ENCODE measurements at regions of chr3 and their contacts with region 1.

Region 1: DNA sequence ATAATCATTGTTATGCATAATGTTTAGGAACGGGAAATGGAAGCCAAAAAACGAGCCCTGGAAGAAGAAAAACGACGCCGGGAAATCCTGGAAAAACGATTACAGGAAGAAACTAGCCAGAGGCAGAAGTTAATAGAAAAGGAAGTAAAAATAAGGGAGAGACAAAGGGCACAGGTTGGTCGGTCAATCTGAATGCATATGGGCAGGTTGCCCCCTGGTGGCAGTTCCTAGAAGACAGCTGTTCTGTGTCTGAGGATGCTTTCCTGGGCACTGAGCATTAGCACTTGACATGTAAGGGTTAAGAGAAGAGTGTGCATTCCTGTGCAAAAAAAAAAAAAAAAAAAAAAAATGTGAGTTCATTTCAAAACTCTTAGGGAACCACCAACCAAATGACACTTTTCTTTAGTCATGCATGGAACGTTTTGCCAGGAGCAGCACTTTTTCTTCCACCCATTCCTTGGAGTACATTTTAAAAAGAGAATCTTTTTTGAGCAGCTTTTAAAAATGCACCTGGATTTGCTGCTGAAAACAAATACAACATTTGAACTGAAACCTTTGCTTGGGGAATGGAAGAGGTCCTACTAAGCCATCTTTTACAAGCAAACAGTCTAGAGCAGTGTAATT is 11.1 kb upstream of the ABHD10 start:
- DNase-seq: peak; percentile 63 to 95 (median 80)
- H3K4me3 ChIP-seq: peak overlapping the region in 4 of 59 donors; percentile 2 to 26 (median 18)
- H3K27ac ChIP-seq: peak overlapping the region in 4 of 59 donors; percentile 17 to 40 (median 39)
- H3K27me3 ChIP-seq: no peaks in the 10 kb centered on the region
- CTCF ChIP-seq: peak; percentile 77 to 99 (median 95)

Region 2: DNA sequence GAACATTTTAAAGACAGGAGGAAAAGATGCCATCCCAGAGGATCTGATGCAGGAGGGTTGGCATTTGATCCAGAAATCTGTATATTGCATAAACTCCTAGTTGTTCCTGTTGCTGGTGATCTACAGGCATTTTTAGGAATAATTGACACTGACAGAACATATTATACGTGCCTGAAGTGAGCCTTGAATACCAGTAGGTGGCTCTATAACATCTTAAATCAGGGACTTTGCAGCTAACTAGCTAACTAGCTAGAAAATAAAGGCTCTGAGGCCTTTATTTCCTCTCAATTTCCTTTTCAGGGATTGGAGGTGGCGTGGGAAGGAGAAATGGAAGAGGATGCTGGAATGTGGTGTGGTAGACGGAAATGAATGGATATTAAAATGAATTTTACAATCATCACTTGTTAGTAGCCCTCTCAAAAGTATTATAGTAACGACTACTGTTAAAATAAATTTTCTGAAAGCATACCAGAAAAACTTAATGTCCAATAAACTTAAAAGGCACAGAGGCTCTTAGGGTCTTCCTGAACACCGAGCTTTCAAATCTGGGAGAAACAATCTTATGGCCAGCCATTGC is 298.8 kb before region 1 on chr3:
- intact Hi-C with region 1: loop called (anchors 2 to 5 kb)
- DNase-seq: no peak
- H3K4me3 ChIP-seq: no peak overlapping the region
- H3K27ac ChIP-seq: peak overlapping the region in 1 of 59 donors; percentile 2
- H3K27me3 ChIP-seq: no peaks in the 10 kb centered on the region
- CTCF ChIP-seq: peak; percentile 45 to 97 (median 83)

Region 3: GRCh38 chr3:111717601-111718000 is 250.2 kb before region 1 on chr3:
- intact Hi-C with region 1: loop called (anchors 1 to 2 kb)
- DNase-seq: peak; percentile 47 to 87 (median 74)
- H3K4me3 ChIP-seq: no peak overlapping the region
- H3K27ac ChIP-seq: no peak overlapping the region
- H3K27me3 ChIP-seq: no peaks in the 10 kb centered on the region
- CTCF ChIP-seq: peak; percentile 82 to 99 (median 95)

Region 4: GRCh38 chr3:111895079-111895478 is 72.7 kb before region 1 on chr3:
- intact Hi-C with region 1: loop called (anchors 2 to 5 kb)
- DNase-seq: no peak
- H3K4me3 ChIP-seq: no peak overlapping the region
- H3K27ac ChIP-seq: no peak overlapping the region
- H3K27me3 ChIP-seq: no peaks in the 10 kb centered on the region
- CTCF ChIP-seq: peak in 55 of 56 donors; percentile 27 to 77 (median 56)

Region 5: DNA sequence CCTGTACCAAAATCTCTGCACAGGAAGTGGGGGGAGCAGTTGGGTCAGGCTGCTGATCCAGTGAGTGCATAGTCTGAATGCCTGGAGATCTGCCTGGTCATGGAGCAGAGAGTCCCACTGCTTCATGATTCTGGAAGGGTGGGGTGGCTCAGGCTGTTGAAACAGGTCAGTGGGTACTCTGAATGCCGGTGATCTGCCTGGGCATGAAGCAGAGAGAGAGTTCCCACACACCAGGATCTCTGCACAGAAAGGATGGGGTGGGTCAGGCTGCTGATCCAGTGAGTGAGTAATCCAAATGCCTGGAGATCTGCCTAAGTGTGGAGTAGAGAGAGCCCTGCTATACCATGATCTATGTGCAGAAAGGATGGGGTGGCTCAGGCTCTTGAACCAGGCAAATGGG is 181.4 kb after region 1 on chr3:
- intact Hi-C with region 1: no loop called
- DNase-seq: no peak
- H3K4me3 ChIP-seq: no peak overlapping the region
- H3K27ac ChIP-seq: no peak overlapping the region
- H3K27me3 ChIP-seq: peaks cover 0 to 15% (median 0%) of the 10 kb centered on the region in 45 donors
- CTCF ChIP-seq: no peak

Measured in dorsolateral prefrontal cortex (tissue), 120 donors.